ENCODE measurements at regions of chr19 and their contacts with region 1.

Region 1: DNA sequence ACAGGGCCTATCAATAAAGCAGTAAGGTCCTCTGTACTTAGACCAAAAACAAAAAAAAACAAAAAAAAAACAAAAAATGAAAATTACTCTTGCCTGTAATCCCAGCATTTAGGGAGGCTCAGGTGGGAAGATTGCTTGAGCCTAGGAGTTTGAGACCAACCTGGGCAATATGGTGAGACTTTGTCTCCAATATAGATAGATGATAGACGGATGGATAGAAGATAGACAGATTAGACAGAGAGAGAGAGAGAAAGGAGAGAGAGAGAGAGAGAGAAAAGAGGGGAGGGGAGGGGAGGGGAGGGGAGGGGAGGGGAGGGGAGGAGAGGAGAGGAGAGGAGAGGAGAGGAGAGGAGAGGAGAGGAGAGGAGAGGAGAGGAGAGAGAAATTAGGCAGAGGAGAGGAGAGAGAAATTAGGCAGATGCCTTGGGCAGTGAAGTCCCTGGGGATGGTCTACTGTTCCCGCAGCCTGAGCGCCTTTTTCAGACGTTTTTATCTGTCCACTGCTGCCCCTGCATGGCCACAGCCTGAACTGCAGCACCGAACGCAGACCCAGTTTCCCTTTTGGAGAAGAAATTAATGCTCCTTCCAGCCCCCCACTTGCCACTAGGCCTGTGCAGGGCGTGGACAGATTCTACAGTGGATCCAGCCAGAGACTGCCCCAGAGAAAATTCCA is 9.8 kb upstream of the ZNF627 start:
- DNase-seq: peak; percentile 79 to 83
- H3K4me3 ChIP-seq: no peak overlapping the region
- H3K27ac ChIP-seq: peak overlapping the region; percentile 0 to 7
- H3K4me1 ChIP-seq: peaks cover 0 to 4% of the 10 kb centered on the region in 2 donors
- H3K27me3 ChIP-seq: no peaks in the 10 kb centered on the region
- CTCF ChIP-seq: peak; percentile 85 to 97 (median 92)
- POLR2A ChIP-seq: no peak

Region 2: GRCh38 chr19:11482384-11483050 is 104.9 kb before region 1 on chr19:
- intact Hi-C with region 1: loop called (anchors 10 kb)
- DNase-seq: peak; percentile 62 to 76
- H3K4me3 ChIP-seq: peak overlapping the region in 1 of 2 donors; percentile 14
- H3K27ac ChIP-seq: no peak overlapping the region
- H3K4me1 ChIP-seq: peaks cover 0 to 28% of the 10 kb centered on the region in 2 donors
- H3K27me3 ChIP-seq: peaks cover 21 to 45% of the 10 kb centered on the region in 2 donors
- CTCF ChIP-seq: peak; percentile 83 to 97 (median 90)
- POLR2A ChIP-seq: no peak

Region 3: DNA sequence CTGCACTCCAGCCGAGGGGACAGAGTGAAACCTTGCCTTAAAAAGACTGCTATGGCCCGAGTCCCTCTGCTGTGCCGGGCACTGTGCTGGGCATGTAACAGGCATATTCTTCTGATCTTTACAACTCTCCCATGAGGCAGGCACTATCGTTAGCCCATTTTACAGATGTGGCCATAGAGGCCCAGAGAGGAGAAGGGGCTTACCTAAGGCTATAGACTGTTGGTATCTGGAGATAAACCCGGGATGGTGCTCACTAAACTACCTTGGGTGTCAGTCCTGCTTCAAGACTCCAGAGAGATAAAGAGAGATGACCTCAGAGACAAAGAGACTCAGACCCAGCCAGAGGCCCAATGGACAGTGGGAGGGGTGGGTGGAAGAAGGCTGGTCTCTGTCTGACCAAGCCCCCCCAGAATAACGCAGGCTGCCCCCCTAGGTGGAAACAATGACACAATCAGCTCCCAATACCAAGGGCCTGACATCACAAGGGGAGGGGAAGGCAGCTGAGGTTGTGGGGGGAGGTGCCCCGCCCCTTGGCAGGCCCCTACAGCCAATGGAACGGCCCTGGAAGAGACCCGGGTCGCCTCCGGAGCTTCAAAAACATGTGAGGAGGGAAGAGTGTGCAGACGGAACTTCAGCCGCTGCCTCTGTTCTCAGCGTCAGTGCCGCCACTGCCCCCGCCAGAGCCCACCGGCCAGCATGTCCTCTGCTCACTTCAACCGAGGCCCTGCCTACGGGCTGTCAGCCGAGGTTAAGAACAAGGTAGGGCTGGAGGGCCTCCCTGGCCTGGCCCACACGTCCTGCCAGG is 49.0 kb before region 1 on chr19 and contains the start of gene CNN1:
- intact Hi-C with region 1: no loop called
- DNase-seq: peak; percentile 94 to 97
- H3K4me3 ChIP-seq: peak within 1 kb of the TSS; percentile 50 to 94
- H3K27ac ChIP-seq: peak within 1 kb of the TSS; percentile 98 to 100
- H3K4me1 ChIP-seq: no peaks in the 10 kb centered on the region
- H3K27me3 ChIP-seq: no peaks in the 10 kb centered on the region
- CTCF ChIP-seq: peak in 1 of 4 experiments; percentile 4
- POLR2A ChIP-seq: peak; percentile 95 to 96
- total RNA-seq, gene CNN1: 267 to 1,727 (median 599) TPM